Psoas muscle (tissue), 8 donors: ENCODE measurements at regions of chr6 and their contacts with region 1.

Region 1: DNA sequence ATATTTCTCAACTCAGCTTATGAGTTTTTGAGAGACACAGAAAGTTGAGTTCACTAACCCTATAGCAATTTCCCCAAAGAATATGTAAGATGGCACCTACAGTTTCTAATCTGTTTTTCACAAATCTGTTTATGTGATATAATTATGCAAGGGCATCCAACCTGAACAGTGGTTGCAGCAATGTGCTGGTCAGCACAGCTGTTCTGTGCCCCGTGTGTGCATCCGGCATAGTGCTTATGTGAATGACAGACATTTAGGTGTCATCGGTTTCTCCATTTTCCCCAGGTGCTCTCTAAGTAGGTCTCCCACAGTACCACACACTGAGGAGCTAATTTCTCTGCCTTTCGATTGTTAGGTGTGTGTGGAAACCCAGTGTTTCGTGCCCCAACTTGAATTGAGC is 7.7 kb upstream of the BACH2 start:
- DNase-seq: no peak
- ATAC-seq: no peak
- H3K4me3 ChIP-seq: no peak overlapping the region
- H3K27ac ChIP-seq: no peak overlapping the region
- H3K4me1 ChIP-seq: no peaks in the 10 kb centered on the region
- H3K27me3 ChIP-seq: peaks cover 0 to 3% (median 0%) of the 10 kb centered on the region in 3 donors
- CTCF ChIP-seq: no peak

Region 2: GRCh38 chr6:88933521-88933920 is 1370.8 kb before region 1 on chr6:
- intact Hi-C with region 1: no loop called
- DNase-seq: no peak
- ATAC-seq: no peak
- H3K4me3 ChIP-seq: no peak overlapping the region
- H3K27ac ChIP-seq: no peak overlapping the region
- H3K4me1 ChIP-seq: no peaks in the 10 kb centered on the region
- H3K27me3 ChIP-seq: no peaks in the 10 kb centered on the region
- CTCF ChIP-seq: no peak

Region 3: DNA sequence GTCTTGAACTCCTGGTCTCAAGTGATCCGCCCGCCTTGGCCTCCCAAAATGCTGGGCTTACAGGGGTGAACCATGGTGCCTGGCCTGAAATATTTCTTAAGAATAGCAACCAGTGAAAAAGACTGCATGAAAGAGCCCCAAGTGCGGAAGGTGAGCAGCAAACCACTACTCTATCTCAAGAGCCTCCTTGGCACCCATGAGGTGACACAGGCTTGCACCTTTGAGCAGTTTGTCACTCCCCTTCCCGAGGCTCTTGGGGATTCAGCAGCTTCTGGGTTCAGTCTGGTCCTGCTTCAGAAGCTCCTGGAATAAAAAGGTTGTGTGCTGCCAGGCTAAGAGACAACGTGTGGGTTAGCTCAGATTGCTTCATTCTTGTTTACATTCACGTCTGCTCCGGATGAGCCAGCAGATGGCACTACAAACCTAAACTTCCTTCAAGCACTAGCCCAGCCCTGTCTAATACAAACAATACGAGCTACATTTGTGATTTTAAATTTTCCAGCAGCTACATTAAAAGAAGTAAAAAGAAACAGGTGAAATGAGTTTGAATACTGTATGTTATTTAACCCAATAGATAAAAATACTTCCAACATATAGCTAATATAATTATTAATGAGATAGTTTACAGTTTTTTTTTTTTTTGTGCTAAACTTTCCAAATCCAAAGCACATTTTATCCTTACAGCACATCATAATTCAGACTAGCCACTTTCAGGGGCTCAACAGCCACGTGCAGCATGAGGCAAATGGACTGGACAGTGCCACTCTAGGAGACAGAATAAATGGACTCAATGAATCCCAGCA is 363.9 kb before region 1 on chr6:
- intact Hi-C with region 1: loop called in 1 of 2 experiments (anchors 5 kb)
- DNase-seq: peak in 1 of 2 donors; percentile 48
- ATAC-seq: peak; percentile 87 to 96 (median 90)
- H3K4me3 ChIP-seq: no peak overlapping the region
- H3K27ac ChIP-seq: no peak overlapping the region
- H3K4me1 ChIP-seq: peaks cover 14% of the 10 kb centered on the region
- H3K27me3 ChIP-seq: no peaks in the 10 kb centered on the region
- CTCF ChIP-seq: peak; percentile 68

Region 4: DNA sequence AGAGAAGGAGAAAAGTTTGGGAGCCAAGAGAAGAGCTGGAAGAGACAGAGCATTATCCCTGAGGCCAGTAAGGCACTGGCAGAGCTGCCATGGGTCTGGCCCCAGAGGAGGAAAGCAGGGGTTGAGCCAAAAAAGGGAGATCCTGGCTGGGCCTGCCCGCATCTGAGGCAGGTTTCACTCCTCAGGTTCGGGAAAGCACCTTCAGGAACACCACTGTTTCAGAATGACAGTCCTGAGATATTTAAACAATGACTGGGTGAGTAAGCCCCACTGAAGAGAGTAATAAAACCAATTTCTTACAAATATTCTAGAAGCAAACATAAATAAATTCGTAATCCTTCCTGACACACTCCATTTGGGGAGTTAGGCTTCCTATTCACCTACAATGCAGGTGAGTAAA is 159.9 kb before region 1 on chr6:
- intact Hi-C with region 1: no loop called
- DNase-seq: no peak
- ATAC-seq: no peak
- H3K4me3 ChIP-seq: no peak overlapping the region
- H3K27ac ChIP-seq: no peak overlapping the region
- H3K4me1 ChIP-seq: peaks cover 5% of the 10 kb centered on the region
- H3K27me3 ChIP-seq: no peaks in the 10 kb centered on the region
- CTCF ChIP-seq: no peak

Region 5: DNA sequence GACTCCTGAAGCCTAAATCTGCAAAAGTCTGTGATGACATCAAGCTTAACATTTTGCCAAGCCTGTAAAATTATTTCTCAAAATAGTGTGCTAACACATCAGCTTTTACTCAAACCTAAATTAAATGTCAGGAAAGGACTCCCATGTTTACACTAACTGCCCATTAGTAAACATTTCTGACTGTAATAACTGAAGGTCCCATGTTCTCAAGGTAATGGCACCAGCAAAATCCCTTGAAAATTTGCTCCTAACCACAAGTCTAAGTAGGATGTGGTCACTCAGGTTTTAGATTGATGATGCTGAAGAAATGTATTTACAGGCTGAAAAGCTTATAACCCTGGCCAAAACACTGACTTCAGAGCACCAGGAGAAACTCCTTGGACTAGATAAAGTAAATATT is 40.7 kb before region 1 on chr6:
- intact Hi-C with region 1: no loop called
- DNase-seq: no peak
- ATAC-seq: no peak
- H3K4me3 ChIP-seq: no peak overlapping the region
- H3K27ac ChIP-seq: no peak overlapping the region
- H3K4me1 ChIP-seq: peaks cover 5% of the 10 kb centered on the region
- H3K27me3 ChIP-seq: no peaks in the 10 kb centered on the region
- CTCF ChIP-seq: no peak

Region 6: DNA sequence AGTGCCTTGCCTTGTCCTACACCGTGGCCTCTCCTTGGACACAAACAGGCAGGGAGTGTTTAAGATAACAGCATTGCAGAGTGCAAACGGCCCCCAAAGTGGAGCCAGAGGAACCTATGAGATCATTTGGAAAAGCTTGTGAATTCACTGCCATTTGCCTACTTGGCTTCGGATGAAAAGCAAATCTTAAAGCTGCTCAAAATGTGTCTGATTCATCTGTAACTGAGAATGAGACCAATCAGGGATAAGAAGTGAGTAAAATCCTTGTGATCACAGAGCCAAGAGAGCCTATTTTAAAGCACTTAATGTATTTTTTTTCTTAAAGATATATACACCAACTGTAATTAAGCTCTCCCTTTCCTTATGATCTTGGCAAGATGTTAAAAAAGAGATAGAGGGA is 58.0 kb after region 1 on chr6:
- intact Hi-C with region 1: loop called in 1 of 2 experiments (anchors 5 kb)
- DNase-seq: no peak
- ATAC-seq: no peak
- H3K4me3 ChIP-seq: no peak overlapping the region
- H3K27ac ChIP-seq: no peak overlapping the region
- H3K4me1 ChIP-seq: no peaks in the 10 kb centered on the region
- H3K27me3 ChIP-seq: no peaks in the 10 kb centered on the region
- CTCF ChIP-seq: no peak